HEK293T (cell line): ENCODE measurements at regions of chr12 and their contacts with region 1.

Region 1: DNA sequence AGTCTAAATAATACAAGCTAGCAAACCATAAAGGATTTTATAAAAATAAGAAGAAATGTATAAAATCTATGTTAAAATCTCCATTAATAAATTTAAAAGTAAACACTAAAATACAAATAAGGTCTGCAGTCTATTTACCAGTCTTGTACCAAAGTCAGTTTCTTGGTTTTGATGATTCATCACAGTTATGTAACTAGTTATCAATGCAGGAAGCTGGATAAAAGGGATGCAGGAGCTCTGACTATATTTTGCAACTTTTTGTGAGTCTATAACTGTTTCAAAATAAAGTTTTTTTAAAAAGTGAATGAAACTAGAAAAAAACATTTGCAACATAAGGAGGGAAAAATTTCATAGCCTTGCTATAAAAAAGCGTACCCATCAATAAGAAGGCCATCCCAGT is 151.5 kb downstream of the DERA start:
- DNase-seq: no peak

Region 2: DNA sequence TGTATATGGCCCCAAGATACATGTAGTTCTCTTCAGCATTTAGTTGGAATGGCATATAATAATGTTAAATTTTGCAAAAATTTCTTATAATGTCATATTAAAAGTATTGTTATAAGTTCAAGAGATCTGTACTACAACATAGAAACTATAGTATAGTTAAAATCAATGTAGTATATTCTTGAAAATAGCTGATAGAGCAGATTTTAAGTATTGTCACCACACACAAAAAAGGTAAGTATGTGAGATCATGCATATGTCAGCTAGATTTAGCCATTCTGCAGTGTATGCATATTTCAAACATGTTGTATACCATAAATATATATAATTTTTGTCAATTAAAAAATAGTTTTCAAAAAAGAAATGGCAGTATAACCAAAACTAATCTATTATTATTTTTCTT is 1581.4 kb before region 1 on chr12:
- CTCF ChIA-PET with region 1: interaction called, 15 read pairs
- POLR2A ChIA-PET with region 1: no interaction called
- DNase-seq: no peak

Region 3: GRCh38 chr12:15996254-15996653 is 66.4 kb before region 1 on chr12:
- CTCF ChIA-PET with region 1: no interaction called
- POLR2A ChIA-PET with region 1: no interaction called
- DNase-seq: no peak